ENCODE measurements at regions of chr14 and their contacts with region 1.

Region 1: GRCh38 chr14:73728717-73729330 is 14.6 kb upstream of the PNMA1 start:
- DNase-seq: no peak
- H3K4me3 ChIP-seq: no peak overlapping the region
- H3K27ac ChIP-seq: peak overlapping the region; percentile 11
- H3K27me3 ChIP-seq: no peaks in the 10 kb centered on the region
- CTCF ChIP-seq: peak; percentile 96

Region 2: GRCh38 chr14:73713803-73714655 is 14.8 kb before region 1 on chr14 and contains the start of gene PNMA1:
- CTCF ChIA-PET with region 1: interaction called, 8 read pairs
- POLR2A ChIA-PET with region 1: interaction called, 10 read pairs
- DNase-seq: no peak
- H3K4me3 ChIP-seq: peak within 1 kb of the TSS; percentile 88
- H3K27ac ChIP-seq: peak within 1 kb of the TSS; percentile 73
- H3K27me3 ChIP-seq: no peaks in the 10 kb centered on the region
- CTCF ChIP-seq: no peak
- polyA plus RNA-seq, gene PNMA1: 21.3 and 21.5 TPM in 2 replicates

Region 3: DNA sequence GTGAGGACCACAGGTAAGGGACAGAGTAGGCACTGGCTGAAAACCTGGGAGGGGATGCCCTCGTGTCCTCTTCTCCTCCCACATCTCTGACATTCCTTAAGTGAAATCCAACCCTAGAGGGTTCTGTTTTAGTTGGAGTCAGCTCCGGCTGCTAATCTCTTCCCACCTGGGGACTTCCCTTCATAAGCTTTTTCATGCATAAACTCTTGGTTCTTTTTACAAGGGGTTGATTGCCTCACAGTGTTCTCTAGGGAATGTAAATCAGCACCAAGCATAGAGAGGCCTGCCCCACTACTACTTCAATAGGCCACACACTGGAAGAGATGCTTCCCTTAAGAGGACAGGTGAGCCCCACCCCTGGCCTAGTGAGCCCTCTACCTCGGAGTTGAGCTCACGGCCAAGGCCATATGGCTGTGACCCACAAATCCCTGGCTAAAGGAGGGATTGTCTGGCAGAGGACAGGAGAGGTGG is 700.4 kb after region 1 on chr14:
- CTCF ChIA-PET with region 1: no interaction called
- POLR2A ChIA-PET with region 1: no interaction called
- DNase-seq: no peak
- H3K4me3 ChIP-seq: no peak overlapping the region
- H3K27ac ChIP-seq: no peak overlapping the region
- H3K27me3 ChIP-seq: peaks cover 27% of the 10 kb centered on the region
- CTCF ChIP-seq: no peak

Measured in AG04450 (cell line).